MCF 10A (cell line): ENCODE measurements at regions of chr1 and their contacts with region 1.

Region 1: GRCh38 chr1:8015036-8015808 is 10.9 kb downstream of the ERRFI1 start:
- DNase-seq: peak; percentile 82
- H3K4me3 Mint-ChIP-seq: peak overlapping the region; percentile 88
- H3K27ac Mint-ChIP-seq: peak overlapping the region; percentile 82
- H3K4me1 Mint-ChIP-seq: peaks cover 73% of the 10 kb centered on the region
- H3K27me3 Mint-ChIP-seq: no peaks in the 10 kb centered on the region
- CTCF ChIP-seq: peak; percentile 64

Region 2: DNA sequence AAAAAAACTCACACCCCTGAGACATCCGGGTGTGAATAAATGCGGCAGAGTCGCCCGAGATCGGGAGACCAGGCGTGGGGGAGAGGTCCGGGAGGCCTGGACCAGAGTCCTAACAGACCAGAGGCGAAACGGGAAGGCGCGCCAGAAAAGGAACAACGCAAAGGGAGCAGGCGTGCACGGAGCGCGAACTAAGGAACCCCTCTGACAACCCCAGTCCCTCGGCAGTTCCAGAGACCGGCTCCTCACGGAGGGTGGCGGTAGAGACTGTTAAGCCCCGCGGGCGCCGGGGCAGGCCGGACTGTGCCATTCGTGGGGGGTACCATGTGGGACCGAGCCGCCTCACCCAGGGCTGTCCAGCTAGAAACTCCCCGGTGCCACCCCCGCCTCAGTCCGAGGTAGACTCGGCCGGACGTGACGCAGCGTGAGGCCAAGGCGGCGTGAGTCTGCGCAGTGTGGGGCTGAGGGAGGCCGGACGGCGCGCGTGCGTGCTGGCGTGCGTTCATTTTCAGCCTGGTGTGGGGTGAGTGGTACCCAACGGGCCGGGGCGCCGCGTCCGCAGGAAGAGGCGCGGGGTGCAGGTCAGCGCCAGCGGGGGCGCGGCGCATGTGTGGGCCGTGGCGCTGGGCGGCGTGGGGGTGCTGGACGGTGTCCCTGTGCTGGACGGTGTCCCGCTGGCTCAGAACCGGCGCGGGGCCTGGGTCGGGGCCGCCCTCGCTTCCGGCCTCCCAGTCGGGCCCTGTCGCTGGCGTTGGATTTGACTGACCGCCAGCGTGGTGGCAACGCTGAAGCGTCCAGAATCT is 53.8 kb before region 1 on chr1 and contains the start of gene PARK7:
- CTCF ChIA-PET with region 1: no interaction called
- POLR2A ChIA-PET with region 1: interaction called, 12 read pairs
- intact Hi-C with region 1: no loop called
- DNase-seq: peak; percentile 99
- H3K4me3 Mint-ChIP-seq: peak within 1 kb of the TSS; percentile 84
- H3K27ac Mint-ChIP-seq: peak within 1 kb of the TSS; percentile 30
- H3K4me1 Mint-ChIP-seq: peaks cover 11% of the 10 kb centered on the region
- H3K27me3 Mint-ChIP-seq: no peaks in the 10 kb centered on the region
- CTCF ChIP-seq: peak; percentile 19
- total RNA-seq, gene PARK7: 419 and 450 TPM in 2 replicates

Region 3: GRCh38 chr1:7983086-7983778 is 32.0 kb before region 1 on chr1:
- CTCF ChIA-PET with region 1: interaction called, 32 read pairs
- POLR2A ChIA-PET with region 1: interaction called, 15 read pairs
- intact Hi-C with region 1: loop called (anchors 5 kb)
- DNase-seq: no peak
- H3K4me3 Mint-ChIP-seq: no peak overlapping the region
- H3K27ac Mint-ChIP-seq: peak overlapping the region; percentile 54
- H3K4me1 Mint-ChIP-seq: peaks cover 6% of the 10 kb centered on the region
- H3K27me3 Mint-ChIP-seq: no peaks in the 10 kb centered on the region
- CTCF ChIP-seq: no peak

Region 4: DNA sequence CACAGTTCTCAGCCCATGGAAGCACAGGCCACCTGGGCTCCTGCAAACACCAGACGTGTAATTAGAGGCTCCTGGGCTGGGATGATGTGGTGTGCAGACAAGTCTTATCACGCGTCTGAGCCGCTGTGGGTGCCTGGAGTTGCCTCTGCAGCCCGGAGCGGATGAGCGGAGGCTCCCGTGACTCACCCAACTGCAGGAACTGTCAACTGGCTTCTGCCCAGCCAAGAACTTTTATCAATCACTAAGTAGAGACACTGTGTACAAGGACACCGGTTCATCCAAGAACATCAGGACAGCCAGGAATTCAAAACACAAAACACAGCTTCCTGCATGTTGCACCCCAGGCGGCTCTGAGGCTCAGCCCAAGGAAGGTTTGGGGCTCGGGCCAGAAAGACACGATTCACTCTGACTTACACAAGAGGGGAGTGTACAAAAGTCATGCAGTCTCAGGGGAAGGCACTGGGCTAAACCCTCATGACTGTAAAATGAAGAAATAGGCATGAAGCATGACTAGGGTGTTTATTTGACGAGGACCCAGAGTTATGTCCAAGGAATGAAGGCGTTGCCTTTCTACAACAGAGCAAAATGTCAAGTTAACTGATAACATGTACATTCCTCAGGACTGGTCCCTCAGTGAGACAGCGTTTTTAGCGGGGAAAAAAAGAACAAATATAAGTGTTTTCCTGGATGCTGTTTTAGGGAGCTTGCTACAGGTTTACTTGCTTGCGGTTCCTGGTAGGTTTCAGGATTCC is 10.2 kb before region 1 on chr1:
- CTCF ChIA-PET with region 1: interaction called, 18 read pairs
- POLR2A ChIA-PET with region 1: interaction called, 206 read pairs
- intact Hi-C with region 1: no loop called
- DNase-seq: peak; percentile 99
- H3K4me3 Mint-ChIP-seq: peak overlapping the region; percentile 57
- H3K27ac Mint-ChIP-seq: peak overlapping the region; percentile 84
- H3K4me1 Mint-ChIP-seq: peaks cover 38% of the 10 kb centered on the region
- H3K27me3 Mint-ChIP-seq: no peaks in the 10 kb centered on the region
- CTCF ChIP-seq: no peak

Region 5: GRCh38 chr1:8097077-8097799 is 82.0 kb after region 1 on chr1:
- CTCF ChIA-PET with region 1: no interaction called
- POLR2A ChIA-PET with region 1: interaction called, 10 read pairs
- intact Hi-C with region 1: no loop called
- DNase-seq: peak; percentile 85
- H3K4me3 Mint-ChIP-seq: peak overlapping the region; percentile 19
- H3K27ac Mint-ChIP-seq: peak overlapping the region; percentile 96
- H3K4me1 Mint-ChIP-seq: peaks cover 55% of the 10 kb centered on the region
- H3K27me3 Mint-ChIP-seq: no peaks in the 10 kb centered on the region
- CTCF ChIP-seq: no peak

Region 6: GRCh38 chr1:8211589-8212442 is 196.6 kb after region 1 on chr1:
- CTCF ChIA-PET with region 1: no interaction called
- POLR2A ChIA-PET with region 1: interaction called, 27 read pairs
- intact Hi-C with region 1: no loop called
- DNase-seq: peak; percentile 99
- H3K4me3 Mint-ChIP-seq: peak overlapping the region; percentile 51
- H3K27ac Mint-ChIP-seq: peak overlapping the region; percentile 85
- H3K4me1 Mint-ChIP-seq: peaks cover 26% of the 10 kb centered on the region
- H3K27me3 Mint-ChIP-seq: no peaks in the 10 kb centered on the region
- CTCF ChIP-seq: no peak

Region 7: GRCh38 chr1:8259498-8260290 is 244.5 kb after region 1 on chr1:
- CTCF ChIA-PET with region 1: interaction called, 4 read pairs
- POLR2A ChIA-PET with region 1: interaction called, 55 read pairs
- intact Hi-C with region 1: no loop called
- DNase-seq: peak; percentile 93
- H3K4me3 Mint-ChIP-seq: peak overlapping the region; percentile 59
- H3K27ac Mint-ChIP-seq: peak overlapping the region; percentile 98
- H3K4me1 Mint-ChIP-seq: peaks cover 38% of the 10 kb centered on the region
- H3K27me3 Mint-ChIP-seq: no peaks in the 10 kb centered on the region
- CTCF ChIP-seq: no peak